HAP-1 (cell line): ENCODE measurements at regions of chr1 and their contacts with region 1.

Region 1: GRCh38 chr1:19918057-19918456 is 5.4 kb downstream of the PLA2G2E start:
- DNase-seq: peak; percentile 62 to 89
- H3K4me3 ChIP-seq: no peak overlapping the region
- H3K4me1 ChIP-seq: no peaks in the 10 kb centered on the region
- H3K27me3 ChIP-seq: no peaks in the 10 kb centered on the region

Region 2: GRCh38 chr1:20151906-20152598 is 234.0 kb after region 1 on chr1:
- in situ Hi-C with region 1: loop called (anchors 5 kb)
- DNase-seq: peak; percentile 55 to 92
- H3K4me3 ChIP-seq: peak overlapping the region; percentile 21
- H3K4me1 ChIP-seq: no peaks in the 10 kb centered on the region; the same call in 1 of the 2 replicates
- H3K27me3 ChIP-seq: no peaks in the 10 kb centered on the region